ENCODE measurements at regions of chr17 and their contacts with region 1.

Region 1: DNA sequence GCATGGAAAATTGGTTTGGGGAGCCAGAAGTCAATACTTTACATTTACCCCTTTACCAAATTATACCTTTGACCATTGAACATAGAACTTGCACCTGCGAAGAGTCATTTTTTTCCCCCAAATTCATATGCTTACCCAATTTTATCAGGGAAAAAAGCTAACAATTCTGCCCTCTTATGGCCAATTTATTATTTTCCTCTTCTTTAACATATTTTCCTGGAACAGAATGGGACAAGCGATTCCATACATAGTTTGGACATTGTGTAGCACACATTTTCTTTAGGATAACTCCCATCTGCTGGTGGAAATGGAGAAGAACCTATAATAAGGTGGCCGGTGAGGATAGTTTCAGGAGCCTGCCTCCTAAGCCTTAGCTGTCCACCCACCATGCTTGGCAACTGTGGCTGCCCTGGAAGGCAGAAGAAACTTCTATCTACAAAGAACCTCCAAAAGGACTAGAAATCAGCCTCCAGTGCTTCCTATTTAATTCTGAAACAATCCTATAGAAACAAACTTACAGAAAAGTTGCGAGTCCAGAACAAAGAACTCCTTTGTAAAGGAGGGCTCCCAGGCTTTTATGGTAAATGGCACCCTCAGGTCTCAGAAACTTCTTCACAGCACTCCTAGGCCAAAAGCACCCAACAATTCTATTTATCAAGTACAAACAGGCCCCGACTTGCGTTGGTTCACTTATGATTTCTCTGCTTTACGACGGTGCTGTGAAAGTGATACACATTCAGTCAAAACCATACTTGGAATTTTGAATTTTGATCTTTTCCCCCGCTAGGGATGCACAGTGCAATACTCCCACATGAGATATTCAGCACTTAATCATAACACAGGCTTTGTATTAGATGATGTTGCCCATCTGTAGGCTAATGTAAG is 64.1 kb upstream of the CACNG4 start:
- DNase-seq: peak; percentile 29

Region 2: GRCh38 chr17:66727639-66728570 is 172.5 kb before region 1 on chr17:
- intact Hi-C with region 1: loop called in 1 of 2 experiments (anchors 5 kb)
- DNase-seq: peak; percentile 86

Region 3: DNA sequence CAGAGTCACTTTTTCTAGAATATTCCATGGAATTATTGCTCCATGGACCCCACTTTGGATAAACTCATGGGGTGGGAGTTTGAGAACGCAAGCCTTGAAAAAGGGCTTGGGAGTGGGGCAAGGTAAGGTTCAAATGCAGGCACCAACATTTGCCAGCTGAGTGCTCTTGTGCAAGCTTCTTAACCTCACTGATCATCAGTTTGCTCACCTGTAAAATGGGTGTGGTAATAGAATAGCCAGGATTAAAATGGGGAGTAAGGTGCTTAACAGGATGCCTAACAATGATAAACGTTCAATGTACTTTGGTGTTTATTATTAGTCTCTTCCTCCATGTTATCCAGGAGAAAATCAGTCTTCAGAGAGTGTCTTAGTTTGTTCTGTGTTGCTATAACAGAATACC is 26.4 kb before region 1 on chr17:
- intact Hi-C with region 1: no loop called
- DNase-seq: no peak

Region 4: GRCh38 chr17:66975604-66976384 is 75.4 kb after region 1 on chr17:
- intact Hi-C with region 1: no loop called
- DNase-seq: no peak

Region 5: GRCh38 chr17:67194134-67194533 is 293.8 kb after region 1 on chr17:
- intact Hi-C with region 1: no loop called
- DNase-seq: no peak

Measured in posterior vena cava (tissue), 2 donors.